AG04450 (cell line): ENCODE measurements at regions of chr13 and their contacts with region 1.

Region 1: GRCh38 chr13:50911937-50912795 is 2.6 kb downstream of the RNASEH2B start:
- DNase-seq: peak; percentile 79
- H3K4me3 ChIP-seq: no peak overlapping the region
- H3K27ac ChIP-seq: no peak overlapping the region
- H3K27me3 ChIP-seq: no peaks in the 10 kb centered on the region
- CTCF ChIP-seq: peak; percentile 82

Region 2: DNA sequence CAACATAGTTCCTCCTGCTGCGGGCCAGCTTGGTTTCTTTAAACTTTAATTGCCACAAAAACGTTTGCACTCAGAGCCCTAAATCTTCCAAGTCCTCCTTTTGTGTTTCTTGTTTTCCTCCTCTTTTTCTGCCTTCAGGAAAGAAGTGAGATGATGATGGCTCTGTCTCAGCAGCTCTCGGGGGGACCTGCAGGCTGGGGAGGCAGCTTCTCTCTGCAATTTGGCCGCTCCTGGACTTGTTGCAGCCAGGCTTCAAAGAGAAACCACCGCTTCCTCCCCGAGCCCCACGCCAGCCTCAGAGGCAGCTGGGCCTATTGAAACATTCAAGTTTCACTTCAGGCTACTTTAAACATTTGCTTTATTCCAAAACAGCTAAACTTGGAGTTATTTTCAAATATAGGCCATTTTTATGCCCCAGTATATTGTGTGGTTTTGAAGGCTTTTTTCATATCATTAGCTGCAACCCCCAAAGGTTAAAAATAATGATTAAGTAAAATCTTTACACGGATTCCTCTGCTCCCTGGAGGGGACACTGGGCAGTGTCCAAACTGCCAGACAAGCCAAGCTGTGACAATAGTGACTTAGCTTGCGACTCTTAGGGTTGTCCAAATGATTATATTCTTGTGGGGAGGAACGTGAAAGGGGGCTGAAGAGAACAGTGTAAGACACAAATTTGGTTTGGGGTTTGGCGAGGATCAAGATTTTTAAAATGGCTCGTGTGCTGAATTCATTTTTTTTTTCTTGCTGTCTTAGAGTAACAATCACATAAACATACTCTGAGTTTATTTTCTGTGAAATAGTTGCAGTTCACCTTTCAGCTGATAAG is 399.5 kb before region 1 on chr13:
- CTCF ChIA-PET with region 1: no interaction called
- POLR2A ChIA-PET with region 1: no interaction called
- DNase-seq: no peak
- H3K4me3 ChIP-seq: peak overlapping the region; percentile 41
- H3K27ac ChIP-seq: peak overlapping the region; percentile 42
- H3K27me3 ChIP-seq: no peaks in the 10 kb centered on the region
- CTCF ChIP-seq: no peak

Region 3: DNA sequence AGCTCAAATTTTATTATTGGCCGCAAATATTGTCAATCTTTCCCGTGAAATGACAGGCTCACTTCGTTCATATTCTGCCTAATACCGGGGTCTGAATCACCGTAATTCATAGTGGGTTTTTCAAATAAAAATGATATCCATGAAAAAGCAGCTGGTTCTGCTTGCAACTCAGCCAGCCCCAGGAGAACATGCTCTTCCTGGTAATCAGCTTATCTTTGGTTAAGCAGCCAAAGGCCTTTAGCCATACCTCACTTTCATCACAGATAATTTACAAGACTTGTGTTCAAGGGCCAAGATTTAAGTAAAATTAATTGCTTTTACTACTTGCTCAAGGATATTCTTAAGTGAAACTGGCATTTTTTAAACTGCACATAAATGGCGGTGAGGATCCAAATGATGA is 19.9 kb after region 1 on chr13:
- CTCF ChIA-PET with region 1: interaction called, 10 read pairs
- POLR2A ChIA-PET with region 1: no interaction called
- DNase-seq: no peak
- H3K4me3 ChIP-seq: no peak overlapping the region
- H3K27ac ChIP-seq: no peak overlapping the region
- H3K27me3 ChIP-seq: no peaks in the 10 kb centered on the region
- CTCF ChIP-seq: no peak

Region 4: GRCh38 chr13:51070005-51070649 is 158.0 kb after region 1 on chr13:
- CTCF ChIA-PET with region 1: interaction called, 13 read pairs
- POLR2A ChIA-PET with region 1: no interaction called
- DNase-seq: peak; percentile 45
- H3K4me3 ChIP-seq: no peak overlapping the region
- H3K27ac ChIP-seq: no peak overlapping the region
- H3K27me3 ChIP-seq: peaks cover 13% of the 10 kb centered on the region
- CTCF ChIP-seq: peak; percentile 97